A549 (cell line): ENCODE measurements at regions of chr5 and their contacts with region 1.

Region 1: DNA sequence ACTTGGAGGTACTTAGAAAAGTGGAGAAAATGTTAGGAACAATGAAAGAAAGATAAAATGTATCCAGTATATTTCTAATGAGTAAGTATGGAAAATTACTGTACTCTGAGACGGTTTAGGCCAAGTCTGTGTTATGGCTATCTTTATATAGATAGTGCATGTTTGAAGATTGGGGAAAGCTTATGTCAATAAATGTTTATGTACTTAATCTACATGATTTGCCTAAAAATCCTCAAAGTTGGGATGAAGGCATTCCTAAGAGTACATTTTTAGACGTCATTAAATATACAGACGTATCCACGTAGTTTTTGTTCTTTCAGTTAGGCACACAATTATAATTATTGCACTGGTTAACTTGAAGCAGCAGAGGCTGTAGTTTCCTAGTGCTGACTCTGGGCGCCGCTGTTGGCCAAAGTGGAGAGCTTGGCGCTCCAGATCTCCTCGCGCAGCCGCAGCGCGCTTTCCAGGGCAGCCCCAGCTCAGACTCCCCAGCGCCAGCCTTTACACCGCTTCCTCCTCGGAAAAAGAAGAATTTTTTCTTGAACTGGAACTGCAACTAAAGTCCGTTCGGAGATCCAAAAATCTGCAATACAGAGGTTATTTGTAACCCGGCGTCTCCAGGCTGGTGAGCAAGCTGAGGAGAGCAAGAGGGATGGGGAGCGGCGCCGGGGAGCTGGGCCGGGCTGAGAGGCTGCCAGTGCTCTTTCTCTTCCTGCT is at the start of gene PCDHGB4:
- DNase-seq: peak in 1 of 2 experiments; percentile 42
- ATAC-seq: peak; percentile 63 to 64
- H3K4me3 ChIP-seq: no peak within 1 kb of the TSS
- H3K27ac ChIP-seq: no peak within 1 kb of the TSS
- H3K4me1 ChIP-seq: no peaks in the 10 kb centered on the region
- CTCF ChIP-seq: peak; percentile 13; the same call in 1 of the 3 replicates
- EP300 ChIP-seq: no peak
- POLR2A ChIP-seq: no peak
- RAD21 ChIP-seq: peak; percentile 26 to 31; a peak in 2 of 5 replicates
- polyA plus RNA-seq, gene PCDHGB4: 1.4 and 1.5 TPM in 2 replicates

Region 2: DNA sequence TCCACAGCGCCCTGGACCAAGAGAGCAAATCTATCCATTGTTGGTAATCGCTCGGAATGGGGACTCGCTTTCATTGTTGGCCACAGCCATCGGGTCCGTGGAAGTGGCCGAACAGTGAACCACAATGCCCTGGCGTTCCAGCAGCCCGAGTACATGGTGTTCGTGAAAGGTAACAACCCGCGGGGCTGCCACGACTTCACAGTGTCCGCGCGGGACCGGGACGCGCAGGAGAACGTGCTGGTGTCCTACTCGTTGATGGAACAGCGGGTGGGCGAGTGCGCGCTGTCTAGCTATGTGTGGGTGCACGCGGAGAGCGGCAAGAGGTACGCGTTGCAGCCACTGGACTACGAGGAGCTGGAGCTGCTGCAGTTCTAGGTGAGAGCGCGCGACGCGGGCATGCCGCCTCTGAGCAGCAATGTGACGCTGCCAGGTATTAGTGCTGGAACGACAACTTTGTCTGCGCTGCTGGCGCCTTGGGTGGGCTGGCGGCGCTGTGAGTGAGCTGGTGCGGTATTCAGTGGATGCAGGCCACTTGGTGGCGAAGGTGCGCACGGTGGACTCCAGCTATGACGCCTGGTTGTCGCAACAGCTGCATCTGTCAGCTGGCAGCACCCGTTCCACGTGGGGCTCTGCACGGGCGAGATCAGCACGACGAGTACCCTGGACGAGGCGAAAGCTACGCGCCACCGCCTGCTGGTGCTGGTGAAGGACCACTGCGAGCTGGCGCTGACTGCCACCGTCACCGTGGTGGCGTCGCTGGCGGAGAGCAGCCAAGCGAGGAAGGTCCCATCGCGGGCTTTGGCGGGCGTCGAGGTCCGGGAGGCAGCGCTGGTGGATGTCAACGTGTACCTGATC is 524.7 kb before region 1 on chr5:
- CTCF ChIA-PET with region 1: no interaction called
- POLR2A ChIA-PET with region 1: no interaction called
- DNase-seq: no peak
- ATAC-seq: no peak
- H3K4me3 ChIP-seq: no peak overlapping the region
- H3K27ac ChIP-seq: no peak overlapping the region
- H3K4me1 ChIP-seq: no peaks in the 10 kb centered on the region
- CTCF ChIP-seq: no peak
- EP300 ChIP-seq: no peak
- POLR2A ChIP-seq: no peak
- RAD21 ChIP-seq: no peak

Region 3: GRCh38 chr5:141369994-141370848 is 17.2 kb before region 1 on chr5 and contains the start of gene PCDHGB3:
- CTCF ChIA-PET with region 1: interaction called, 16 read pairs
- POLR2A ChIA-PET with region 1: interaction called, 3 read pairs
- DNase-seq: peak in 1 of 2 experiments; percentile 55
- ATAC-seq: peak; percentile 90 to 96
- H3K4me3 ChIP-seq: peak within 1 kb of the TSS; percentile 29
- H3K27ac ChIP-seq: peak within 1 kb of the TSS; percentile 2 to 54; a peak in 2 of 6 replicates
- H3K4me1 ChIP-seq: no peaks in the 10 kb centered on the region
- CTCF ChIP-seq: peak; percentile 28; the same call in 2 of the 3 replicates
- EP300 ChIP-seq: no peak
- POLR2A ChIP-seq: no peak
- RAD21 ChIP-seq: peak; percentile 50 to 52
- polyA plus RNA-seq, gene PCDHGB3: 1.1 and 1.2 TPM in 2 replicates

Region 4: DNA sequence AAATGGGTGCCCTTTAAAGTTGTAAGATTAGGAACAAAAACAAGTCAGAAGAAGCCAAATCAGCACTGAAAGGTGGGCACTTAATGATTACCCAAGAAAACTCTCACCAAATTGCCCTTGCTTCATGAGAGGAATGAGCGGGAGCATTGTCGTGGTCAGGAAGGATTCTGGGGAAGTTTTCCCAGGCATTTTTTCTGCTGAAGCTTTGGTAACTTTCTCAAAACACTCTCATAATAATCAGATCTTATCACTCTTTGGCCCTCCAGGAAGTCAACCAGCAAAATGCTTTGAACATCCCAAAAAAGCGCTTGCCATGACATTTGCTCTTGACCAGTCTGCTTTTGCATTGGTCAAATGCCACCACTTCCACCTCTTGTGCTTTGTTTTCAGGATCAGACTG is 78.0 kb after region 1 on chr5:
- CTCF ChIA-PET with region 1: no interaction called
- POLR2A ChIA-PET with region 1: no interaction called
- DNase-seq: no peak
- ATAC-seq: no peak
- H3K4me3 ChIP-seq: no peak overlapping the region
- H3K27ac ChIP-seq: no peak overlapping the region
- H3K4me1 ChIP-seq: no peaks in the 10 kb centered on the region
- CTCF ChIP-seq: no peak
- EP300 ChIP-seq: no peak
- POLR2A ChIP-seq: no peak
- RAD21 ChIP-seq: no peak